Activated CD4-positive, alpha-beta T cell treated with anti-CD3 and anti-CD28 coated beads for 36 hours (primary cell): ENCODE measurements at regions of chr4 and their contacts with region 1.

Region 1: DNA sequence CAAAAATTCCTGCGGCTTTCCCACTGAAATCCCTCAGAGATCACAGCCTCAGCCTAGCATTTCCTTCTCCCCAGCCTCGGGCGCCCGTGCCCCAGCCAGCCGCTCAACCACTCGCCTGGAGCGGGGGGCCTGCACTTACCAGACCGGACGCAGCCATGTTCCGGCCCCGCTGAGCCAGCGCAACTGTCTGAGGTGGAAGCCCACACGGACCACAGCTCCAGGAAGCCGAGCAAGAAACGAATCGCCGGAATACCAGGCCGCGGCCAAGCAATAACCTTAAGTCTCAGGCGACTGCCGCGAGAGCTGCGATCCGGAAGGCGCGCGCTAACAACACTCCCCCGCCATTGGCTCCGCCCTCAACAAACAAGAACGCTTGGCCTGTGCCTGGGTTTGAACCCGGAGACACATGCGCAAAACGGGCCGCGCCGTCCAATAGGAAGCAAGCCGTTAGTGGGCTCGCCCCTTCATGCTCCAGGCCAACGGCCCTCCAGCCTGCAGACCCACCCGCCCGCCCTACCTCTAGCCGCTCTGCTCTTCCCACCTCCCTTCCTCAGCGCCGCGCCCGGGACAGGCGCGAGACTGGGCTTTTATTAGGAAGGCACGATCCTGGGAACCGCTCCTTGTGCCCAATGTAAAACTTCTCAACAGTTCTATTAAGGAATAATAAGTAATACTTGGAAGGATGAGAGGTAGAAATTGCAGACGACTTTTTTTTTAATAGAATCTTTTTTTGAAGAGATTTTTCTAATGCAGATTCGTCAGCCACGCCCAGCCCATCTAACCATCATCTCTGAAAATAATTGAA is at the start of gene CENPC:
- DNase-seq: peak; percentile 97
- ATAC-seq: peak; percentile 98
- H3K4me3 Mint-ChIP-seq: peak within 1 kb of the TSS; percentile 92
- H3K27ac Mint-ChIP-seq: peak within 1 kb of the TSS; percentile 98
- H3K4me1 Mint-ChIP-seq: peaks cover 32% of the 10 kb centered on the region
- H3K27me3 Mint-ChIP-seq: no peaks in the 10 kb centered on the region
- total RNA-seq, gene CENPC: 30.3 to 33.1 TPM

Region 2: DNA sequence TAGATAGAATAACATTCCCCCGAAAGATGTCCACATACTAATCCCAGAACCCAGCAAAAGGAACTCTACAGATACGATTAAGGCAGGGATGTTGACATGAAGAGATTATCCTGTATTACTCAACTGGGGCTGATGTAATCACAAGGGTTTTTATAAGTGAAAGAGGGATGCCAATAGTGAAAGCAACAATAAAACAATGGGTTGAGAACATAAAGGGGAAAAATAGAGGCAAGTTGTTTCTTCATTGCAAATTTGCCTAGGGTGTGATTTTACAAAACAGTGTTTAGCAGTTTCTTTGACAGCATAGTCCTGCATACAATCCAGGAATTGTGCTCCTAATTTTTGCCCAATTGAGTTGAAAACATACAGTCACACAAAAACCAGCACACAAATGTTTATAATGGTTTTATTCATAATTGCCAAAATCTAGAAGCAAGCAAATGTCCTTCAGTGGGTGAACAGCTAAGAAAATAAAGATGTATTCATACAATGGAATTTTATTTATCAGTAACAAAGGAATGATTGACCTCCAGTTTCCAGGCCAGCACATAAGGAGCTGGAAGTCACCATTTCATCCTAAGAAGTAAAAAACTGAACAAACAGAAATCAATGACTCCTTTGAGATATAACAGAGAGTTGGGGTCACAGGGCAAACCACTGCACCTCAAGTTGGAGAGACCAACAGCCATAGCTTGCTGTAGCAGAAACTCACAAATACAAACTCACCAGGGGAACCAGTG is 107.3 kb before region 1 on chr4:
- CTCF ChIA-PET with region 1: no interaction called
- POLR2A ChIA-PET with region 1: no interaction called
- intact Hi-C with region 1: no loop called
- DNase-seq: no peak
- ATAC-seq: peak; percentile 33
- H3K4me3 Mint-ChIP-seq: no peak overlapping the region
- H3K27ac Mint-ChIP-seq: no peak overlapping the region
- H3K4me1 Mint-ChIP-seq: peaks cover 3% of the 10 kb centered on the region
- H3K27me3 Mint-ChIP-seq: no peaks in the 10 kb centered on the region

Region 3: DNA sequence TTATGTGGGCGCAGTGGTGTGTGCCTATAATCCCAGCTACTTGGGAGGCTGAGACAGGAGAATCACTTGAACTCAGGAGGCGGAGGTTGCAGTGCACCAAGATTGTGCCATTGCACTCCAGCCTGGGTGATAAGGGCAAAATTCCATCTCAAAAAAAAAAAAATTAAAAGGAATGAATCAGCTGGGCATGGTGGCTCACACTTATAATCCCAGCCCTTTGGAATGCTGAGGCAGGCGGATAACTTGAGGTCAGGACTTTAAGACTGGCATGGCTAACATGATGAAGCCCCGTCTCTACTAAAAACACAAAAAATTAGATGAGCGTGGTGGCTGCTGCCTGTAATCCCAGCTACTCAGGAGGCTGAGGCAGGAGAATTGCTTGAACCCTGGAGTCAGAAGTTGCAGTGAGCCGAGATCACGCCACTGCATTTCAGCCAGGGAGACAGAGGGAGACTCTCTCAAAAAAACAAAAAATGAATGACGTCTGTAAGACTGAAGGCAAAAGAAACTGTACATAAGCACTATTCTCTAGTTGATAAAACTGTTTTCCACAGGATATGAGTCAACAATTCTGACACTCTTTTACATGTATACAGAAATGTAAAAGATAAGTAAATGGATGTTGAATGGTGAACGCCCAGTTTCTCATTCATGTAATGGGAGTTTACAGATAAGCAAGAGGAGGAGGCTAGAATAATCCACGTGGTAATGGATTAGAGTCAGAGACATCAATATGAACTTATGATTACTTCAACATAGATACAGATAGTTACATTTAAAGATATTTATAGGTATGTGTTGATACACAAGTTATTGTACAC is 22.3 kb before region 1 on chr4:
- CTCF ChIA-PET with region 1: interaction called, 5 read pairs
- POLR2A ChIA-PET with region 1: interaction called, 4 read pairs
- intact Hi-C with region 1: loop called in 1 of 2 experiments (anchors 1 kb)
- DNase-seq: peak; percentile 29
- ATAC-seq: peak; percentile 88
- H3K4me3 Mint-ChIP-seq: peak overlapping the region; percentile 25
- H3K27ac Mint-ChIP-seq: peak overlapping the region; percentile 92
- H3K4me1 Mint-ChIP-seq: peaks cover 63% of the 10 kb centered on the region
- H3K27me3 Mint-ChIP-seq: no peaks in the 10 kb centered on the region

Region 4: GRCh38 chr4:67581208-67581857 is 35.9 kb after region 1 on chr4:
- CTCF ChIA-PET with region 1: interaction called, 4 read pairs
- POLR2A ChIA-PET with region 1: interaction called, 6 read pairs
- intact Hi-C with region 1: loop called (anchors 2 to 5 kb)
- DNase-seq: no peak
- ATAC-seq: peak; percentile 81
- H3K4me3 Mint-ChIP-seq: peak overlapping the region; percentile 19
- H3K27ac Mint-ChIP-seq: peak overlapping the region; percentile 55
- H3K4me1 Mint-ChIP-seq: peaks cover 31% of the 10 kb centered on the region
- H3K27me3 Mint-ChIP-seq: no peaks in the 10 kb centered on the region

Region 5: GRCh38 chr4:67746797-67747495 is 201.5 kb after region 1 on chr4:
- CTCF ChIA-PET with region 1: interaction called, 5 read pairs
- POLR2A ChIA-PET with region 1: no interaction called
- intact Hi-C with region 1: loop called in 1 of 2 experiments (anchors 2 kb)
- DNase-seq: no peak
- ATAC-seq: peak; percentile 78
- H3K4me3 Mint-ChIP-seq: peak overlapping the region; percentile 5
- H3K27ac Mint-ChIP-seq: peak overlapping the region; percentile 77
- H3K4me1 Mint-ChIP-seq: peaks cover 11% of the 10 kb centered on the region
- H3K27me3 Mint-ChIP-seq: no peaks in the 10 kb centered on the region

Region 6: DNA sequence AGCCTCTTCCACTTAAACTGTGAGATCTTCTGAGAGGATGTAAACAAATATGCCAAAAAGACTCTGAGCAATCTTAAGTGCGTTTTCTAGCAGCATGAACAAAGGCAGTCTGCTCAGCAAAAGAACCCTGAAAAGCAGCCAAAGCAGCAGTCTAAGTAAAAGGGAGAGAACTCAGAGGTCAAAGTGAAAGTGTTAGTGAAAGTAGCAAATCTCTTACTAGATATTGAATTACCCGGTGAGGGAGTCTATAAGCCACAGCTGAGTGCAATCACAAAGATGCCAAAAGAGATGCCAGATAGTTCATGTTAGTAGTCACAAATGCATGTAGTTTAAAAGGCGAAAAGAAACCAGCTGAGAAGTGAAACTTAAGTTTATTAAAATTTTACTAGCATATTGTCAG is 216.7 kb after region 1 on chr4:
- CTCF ChIA-PET with region 1: no interaction called
- POLR2A ChIA-PET with region 1: no interaction called
- intact Hi-C with region 1: no loop called
- DNase-seq: no peak
- ATAC-seq: peak; percentile 88
- H3K4me3 Mint-ChIP-seq: no peak overlapping the region
- H3K27ac Mint-ChIP-seq: no peak overlapping the region
- H3K4me1 Mint-ChIP-seq: peaks cover 5% of the 10 kb centered on the region
- H3K27me3 Mint-ChIP-seq: no peaks in the 10 kb centered on the region

Region 7: DNA sequence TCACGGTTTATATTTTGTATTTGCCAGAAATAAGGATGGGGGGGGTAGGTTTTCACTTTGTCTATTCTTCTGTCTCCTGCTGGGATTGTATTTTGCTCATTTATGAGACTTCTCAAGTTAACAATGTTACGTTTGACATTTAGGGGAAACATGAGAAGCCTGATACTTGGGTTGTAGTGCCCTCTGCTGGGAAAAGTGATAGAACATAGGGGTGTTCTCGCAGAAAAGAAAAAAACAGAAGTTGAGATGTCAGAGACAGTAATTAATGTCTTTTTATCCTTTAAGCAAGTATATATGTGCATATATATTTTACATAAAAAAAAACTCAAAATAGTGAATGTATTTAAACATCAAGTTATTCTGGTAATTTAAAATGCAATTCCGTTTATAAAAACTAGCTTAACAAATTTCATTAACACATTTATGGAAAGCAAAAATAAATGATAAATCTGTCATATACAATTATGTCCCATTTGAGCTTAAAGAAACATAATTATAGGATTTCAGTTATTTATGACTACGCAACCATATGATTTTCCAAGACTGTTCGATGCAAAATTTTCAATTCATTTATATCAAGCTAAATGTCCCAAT is 630.3 kb after region 1 on chr4:
- CTCF ChIA-PET with region 1: interaction called, 5 read pairs
- POLR2A ChIA-PET with region 1: no interaction called
- intact Hi-C with region 1: loop called (anchors 2 kb)
- DNase-seq: peak; percentile 64
- ATAC-seq: peak; percentile 77
- H3K4me3 Mint-ChIP-seq: no peak overlapping the region
- H3K27ac Mint-ChIP-seq: no peak overlapping the region
- H3K4me1 Mint-ChIP-seq: no peaks in the 10 kb centered on the region
- H3K27me3 Mint-ChIP-seq: peaks cover 14% of the 10 kb centered on the region

Region 8: DNA sequence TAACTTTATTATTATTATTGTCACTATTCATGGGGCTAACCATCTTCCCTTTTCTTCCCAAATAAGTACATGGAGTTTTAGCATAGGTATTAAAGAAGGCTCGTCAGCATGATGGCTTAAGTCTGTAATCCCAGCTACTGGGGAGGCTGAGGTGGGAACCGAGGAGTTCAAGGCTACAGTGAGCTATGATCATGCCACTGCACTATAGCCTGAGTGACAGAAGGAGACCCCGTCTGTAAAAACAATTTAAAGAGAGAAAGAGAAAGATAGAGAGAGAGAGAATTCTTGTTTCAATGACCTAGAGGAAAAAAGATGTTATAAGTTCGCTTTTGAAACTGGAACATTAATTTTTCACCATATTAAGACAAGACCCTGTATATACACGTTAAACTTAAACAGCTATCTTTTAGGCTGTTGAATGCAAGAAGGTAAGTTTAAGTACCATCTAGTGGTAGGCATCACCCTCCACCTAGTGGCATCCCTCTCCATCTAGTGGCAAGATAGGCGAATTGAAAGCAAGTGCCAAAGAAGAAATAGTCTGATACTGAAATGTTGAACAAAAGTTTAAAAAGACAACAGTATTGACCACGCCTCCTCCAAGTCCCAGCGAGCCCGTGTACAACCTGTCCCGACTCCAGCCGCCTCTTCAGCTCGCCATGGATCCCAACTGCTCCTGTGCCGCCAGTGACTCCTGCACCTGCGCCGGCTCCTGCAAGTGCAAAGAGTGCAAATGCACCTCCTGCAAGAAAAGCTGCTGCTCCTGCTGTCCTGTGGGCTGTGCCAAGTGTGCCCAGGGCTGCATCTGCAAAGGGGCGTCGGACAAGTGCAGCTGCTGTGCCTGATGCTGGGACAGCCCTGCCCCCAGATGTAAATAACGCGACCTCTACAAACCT is 830.5 kb after region 1 on chr4:
- CTCF ChIA-PET with region 1: no interaction called
- POLR2A ChIA-PET with region 1: no interaction called
- intact Hi-C with region 1: loop called in 1 of 2 experiments (anchors 10 kb)
- DNase-seq: peak; percentile 57
- ATAC-seq: peak; percentile 79
- H3K4me3 Mint-ChIP-seq: peak overlapping the region; percentile 64
- H3K27ac Mint-ChIP-seq: no peak overlapping the region
- H3K4me1 Mint-ChIP-seq: peaks cover 15% of the 10 kb centered on the region
- H3K27me3 Mint-ChIP-seq: peaks cover 2% of the 10 kb centered on the region

Region 9: DNA sequence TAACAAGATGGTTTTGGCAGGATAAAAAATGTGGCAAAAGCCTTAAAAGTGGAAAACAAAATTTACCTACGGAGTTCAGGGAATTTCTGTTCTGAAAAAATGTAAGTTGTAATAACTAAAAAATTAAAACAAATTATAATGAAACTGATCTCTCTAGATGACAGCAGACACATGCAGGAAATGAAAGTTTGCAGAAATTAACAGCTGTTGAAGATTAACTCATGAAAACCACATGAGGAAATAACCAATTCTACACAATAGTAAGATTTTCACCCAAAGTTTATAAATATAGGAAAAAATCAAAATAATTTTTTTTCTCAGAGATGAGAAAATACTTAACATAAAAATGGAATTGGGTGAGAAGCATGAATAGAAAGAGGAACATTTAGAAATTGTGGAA is 1172.6 kb after region 1 on chr4:
- CTCF ChIA-PET with region 1: no interaction called
- POLR2A ChIA-PET with region 1: no interaction called
- intact Hi-C with region 1: no loop called
- DNase-seq: no peak
- ATAC-seq: no peak
- H3K4me3 Mint-ChIP-seq: no peak overlapping the region
- H3K27ac Mint-ChIP-seq: no peak overlapping the region
- H3K4me1 Mint-ChIP-seq: no peaks in the 10 kb centered on the region
- H3K27me3 Mint-ChIP-seq: no peaks in the 10 kb centered on the region